ENCODE measurements at regions of chr3 and their contacts with region 1.

Region 1: DNA sequence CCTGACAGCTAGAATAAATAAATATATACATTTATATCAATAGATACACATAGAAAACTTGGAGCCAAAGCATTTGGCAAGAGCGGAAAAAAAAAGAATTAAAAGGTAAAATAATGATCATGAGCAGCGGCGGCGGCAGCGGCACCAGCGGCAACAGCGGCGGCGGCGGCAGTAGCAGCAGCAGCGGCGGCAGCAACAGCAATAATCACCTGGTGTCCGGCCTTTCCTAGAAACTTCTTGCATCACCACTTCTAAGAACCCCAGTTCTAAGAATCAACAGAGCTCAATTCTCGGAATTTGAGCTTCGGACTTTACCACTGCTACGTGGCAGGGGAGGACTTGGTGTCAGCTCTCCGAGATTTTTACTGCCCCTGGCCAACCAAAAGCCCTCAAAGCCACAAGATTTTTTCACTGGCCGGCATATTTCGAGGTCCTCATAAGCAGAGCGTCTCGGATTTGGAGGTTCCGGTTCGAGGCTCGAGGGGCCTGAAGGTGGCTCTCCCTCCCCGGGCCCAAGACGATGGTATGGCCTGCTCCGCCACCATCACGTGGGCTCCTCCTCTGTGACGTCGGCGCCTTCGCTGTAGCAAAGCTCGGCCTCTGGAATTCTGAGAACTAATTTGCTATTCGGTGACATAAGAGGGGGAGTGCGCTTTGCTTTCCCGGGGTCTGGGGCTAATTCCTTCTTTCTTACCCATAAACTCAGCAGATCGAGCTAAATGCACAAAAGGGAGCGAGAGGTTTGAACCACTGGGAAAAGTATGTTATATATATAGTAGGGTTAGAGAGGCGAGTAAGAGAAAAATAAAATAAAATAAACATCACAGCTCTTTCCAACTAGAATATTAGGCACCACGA is at the start of gene BCL6:
- DNase-seq: peak; percentile 92
- H3K4me3 Mint-ChIP-seq: peak within 1 kb of the TSS; percentile 86
- H3K27ac Mint-ChIP-seq: peak within 1 kb of the TSS; percentile 97
- H3K4me1 Mint-ChIP-seq: peaks cover 46% of the 10 kb centered on the region
- H3K27me3 Mint-ChIP-seq: no peaks in the 10 kb centered on the region
- total RNA-seq, gene BCL6: 98.9 to 101 TPM

Region 2: GRCh38 chr3:185937689-185938463 is 1807.6 kb before region 1 on chr3 and contains the start of gene TRA2B:
- CTCF ChIA-PET with region 1: no interaction called
- intact Hi-C with region 1: loop called (anchors 10 kb)
- DNase-seq: peak; percentile 99
- H3K4me3 Mint-ChIP-seq: peak within 1 kb of the TSS; percentile 100
- H3K27ac Mint-ChIP-seq: peak within 1 kb of the TSS; percentile 100
- H3K4me1 Mint-ChIP-seq: peaks cover 20% of the 10 kb centered on the region
- H3K27me3 Mint-ChIP-seq: no peaks in the 10 kb centered on the region
- total RNA-seq, gene TRA2B: 172 to 176 TPM

Region 3: DNA sequence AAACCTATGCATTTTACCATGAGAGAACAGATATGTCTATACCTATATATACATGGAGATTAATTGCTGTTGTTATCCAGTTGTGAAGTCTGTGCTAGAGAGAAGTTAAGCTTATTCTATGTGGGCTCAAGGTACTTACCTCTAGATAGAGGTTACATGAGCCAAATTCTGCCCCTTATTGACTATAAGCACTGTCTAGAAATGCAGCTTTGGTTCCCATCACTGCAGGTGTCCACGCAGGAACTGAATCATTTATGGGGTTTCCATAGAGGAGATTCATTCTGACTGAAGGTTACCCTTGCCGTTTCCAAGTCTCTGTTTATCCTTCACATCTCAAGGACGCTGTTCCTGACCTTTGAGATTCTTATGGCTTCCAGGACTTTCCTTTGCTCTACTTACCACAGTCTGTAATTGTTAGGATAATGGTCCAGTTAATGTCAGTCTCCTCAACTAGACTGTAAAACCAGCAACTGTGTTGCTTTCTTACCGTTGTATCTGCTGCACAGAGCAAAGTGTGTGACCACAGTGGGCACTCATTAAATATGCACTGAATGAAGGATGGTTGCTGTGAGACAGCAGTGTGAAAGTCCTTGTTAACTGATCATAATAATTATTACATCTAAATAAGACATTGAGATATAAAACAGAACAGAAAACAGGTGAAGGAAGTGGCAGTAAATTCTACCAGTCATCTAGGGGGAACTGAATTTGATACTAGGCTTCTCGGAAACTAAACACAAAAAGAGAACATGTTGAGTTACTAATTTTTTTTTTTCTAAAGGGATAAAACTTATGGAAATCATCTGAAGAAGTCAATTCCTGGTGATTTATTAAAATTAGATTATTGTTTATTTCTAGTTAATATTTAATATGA is 43.8 kb after region 1 on chr3:
- CTCF ChIA-PET with region 1: interaction called, 3 read pairs
- intact Hi-C with region 1: loop called (anchors 1 kb)
- DNase-seq: peak; percentile 59
- H3K4me3 Mint-ChIP-seq: no peak overlapping the region
- H3K27ac Mint-ChIP-seq: peak overlapping the region; percentile 69
- H3K4me1 Mint-ChIP-seq: peaks cover 28% of the 10 kb centered on the region
- H3K27me3 Mint-ChIP-seq: no peaks in the 10 kb centered on the region

Region 4: GRCh38 chr3:187870360-187871203 is 125.2 kb after region 1 on chr3:
- CTCF ChIA-PET with region 1: interaction called, 5 read pairs
- intact Hi-C with region 1: loop called (anchors 1 kb)
- DNase-seq: peak; percentile 34
- H3K4me3 Mint-ChIP-seq: no peak overlapping the region
- H3K27ac Mint-ChIP-seq: peak overlapping the region; percentile 37
- H3K4me1 Mint-ChIP-seq: peaks cover 12% of the 10 kb centered on the region
- H3K27me3 Mint-ChIP-seq: no peaks in the 10 kb centered on the region

Region 5: DNA sequence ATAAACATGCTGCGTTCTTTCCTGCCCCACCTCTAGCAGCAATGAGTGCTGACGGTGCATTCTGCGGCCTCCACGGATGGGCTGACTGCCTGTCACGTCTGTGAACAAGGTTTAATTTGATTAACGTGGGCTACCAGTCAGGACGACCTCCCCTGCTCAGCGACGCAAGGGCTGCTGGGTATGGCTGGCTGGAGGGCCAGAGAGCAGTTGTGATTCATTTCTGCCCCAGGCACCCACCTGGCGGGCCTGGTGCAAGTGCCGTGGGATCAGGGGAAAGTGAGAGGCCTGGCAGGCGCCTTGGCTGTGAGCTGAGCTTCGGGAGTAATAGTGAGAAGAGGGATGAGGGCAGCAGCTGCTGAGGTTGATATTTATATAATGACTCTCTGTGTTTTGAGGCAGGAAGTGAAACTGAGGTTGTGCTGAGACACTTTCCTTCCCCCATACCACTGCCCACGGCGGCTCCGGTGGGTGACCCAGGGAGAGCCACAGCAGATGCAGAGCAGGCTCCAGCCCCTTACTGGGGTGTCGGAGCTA is 190.3 kb after region 1 on chr3:
- CTCF ChIA-PET with region 1: no interaction called
- intact Hi-C with region 1: no loop called
- DNase-seq: peak; percentile 47
- H3K4me3 Mint-ChIP-seq: no peak overlapping the region
- H3K27ac Mint-ChIP-seq: no peak overlapping the region
- H3K4me1 Mint-ChIP-seq: peaks cover 14% of the 10 kb centered on the region
- H3K27me3 Mint-ChIP-seq: no peaks in the 10 kb centered on the region

Region 6: GRCh38 chr3:188253800-188254452 is 508.5 kb after region 1 on chr3:
- CTCF ChIA-PET with region 1: no interaction called
- intact Hi-C with region 1: loop called (anchors 1 kb)
- DNase-seq: peak; percentile 54
- H3K4me3 Mint-ChIP-seq: no peak overlapping the region
- H3K27ac Mint-ChIP-seq: peak overlapping the region; percentile 76
- H3K4me1 Mint-ChIP-seq: peaks cover 44% of the 10 kb centered on the region
- H3K27me3 Mint-ChIP-seq: no peaks in the 10 kb centered on the region

Region 7: DNA sequence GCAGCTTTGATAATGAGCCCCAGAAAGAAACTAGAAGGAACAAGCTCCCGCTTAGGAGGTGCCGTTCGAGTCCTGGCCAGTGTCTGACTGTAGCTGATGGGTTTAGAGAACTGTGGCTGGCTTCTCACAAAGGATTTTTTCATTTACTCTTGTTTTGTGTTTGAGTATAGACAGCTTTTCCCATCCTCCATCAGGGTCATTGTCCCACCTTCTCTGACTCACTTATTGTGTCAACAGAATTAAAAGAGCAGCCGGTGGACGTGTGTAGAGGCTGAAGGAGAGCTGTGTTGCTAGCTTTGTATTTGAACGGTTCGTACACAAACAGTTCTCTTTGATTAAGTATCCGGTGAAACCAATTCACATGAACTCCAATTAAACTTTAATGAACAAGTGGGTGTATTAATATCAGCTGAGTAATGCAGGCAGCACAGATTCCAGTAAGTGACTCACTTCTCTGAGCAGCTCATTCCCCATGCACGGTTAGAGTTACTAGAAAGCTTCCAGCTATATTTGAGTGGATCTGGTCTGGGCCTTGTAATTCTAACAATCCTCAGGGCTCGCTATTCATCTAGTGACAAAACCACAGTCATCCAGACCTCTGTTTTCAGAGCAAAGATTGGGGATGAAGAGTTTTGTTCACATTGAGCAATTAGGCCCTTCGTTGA is 549.5 kb after region 1 on chr3:
- CTCF ChIA-PET with region 1: interaction called, 4 read pairs
- intact Hi-C with region 1: loop called (anchors 1 kb)
- DNase-seq: peak; percentile 49
- H3K4me3 Mint-ChIP-seq: no peak overlapping the region
- H3K27ac Mint-ChIP-seq: peak overlapping the region; percentile 69
- H3K4me1 Mint-ChIP-seq: peaks cover 85% of the 10 kb centered on the region
- H3K27me3 Mint-ChIP-seq: no peaks in the 10 kb centered on the region

Region 8: GRCh38 chr3:188584162-188584529 is 838.7 kb after region 1 on chr3:
- CTCF ChIA-PET with region 1: interaction called, 8 read pairs
- intact Hi-C with region 1: loop called (anchors 1 kb)
- DNase-seq: peak; percentile 61
- H3K4me3 Mint-ChIP-seq: no peak overlapping the region
- H3K27ac Mint-ChIP-seq: no peak overlapping the region
- H3K4me1 Mint-ChIP-seq: peaks cover 15% of the 10 kb centered on the region
- H3K27me3 Mint-ChIP-seq: no peaks in the 10 kb centered on the region

Measured in activated naive CD4-positive, alpha-beta T cell treated with anti-CD3 and anti-CD28 coated beads for 36 hours (primary cell).